ENCODE measurements at regions of chr5 and their contacts with region 1.

Region 1: GRCh38 chr5:94618493-94619328 is at the starts of genes KIAA0825 and SLF1:
- DNase-seq: peak; percentile 83
- H3K4me3 Mint-ChIP-seq: peak within 1 kb of the TSS; percentile 89
- H3K27ac Mint-ChIP-seq: peak within 1 kb of the TSS; percentile 96
- H3K4me1 Mint-ChIP-seq: peaks cover 55% of the 10 kb centered on the region
- H3K27me3 Mint-ChIP-seq: no peaks in the 10 kb centered on the region
- total RNA-seq, gene KIAA0825: 0.36 and 0.47 TPM in 2 replicates
- total RNA-seq, gene SLF1: 15.4 and 17.9 TPM in 2 replicates

Region 2: DNA sequence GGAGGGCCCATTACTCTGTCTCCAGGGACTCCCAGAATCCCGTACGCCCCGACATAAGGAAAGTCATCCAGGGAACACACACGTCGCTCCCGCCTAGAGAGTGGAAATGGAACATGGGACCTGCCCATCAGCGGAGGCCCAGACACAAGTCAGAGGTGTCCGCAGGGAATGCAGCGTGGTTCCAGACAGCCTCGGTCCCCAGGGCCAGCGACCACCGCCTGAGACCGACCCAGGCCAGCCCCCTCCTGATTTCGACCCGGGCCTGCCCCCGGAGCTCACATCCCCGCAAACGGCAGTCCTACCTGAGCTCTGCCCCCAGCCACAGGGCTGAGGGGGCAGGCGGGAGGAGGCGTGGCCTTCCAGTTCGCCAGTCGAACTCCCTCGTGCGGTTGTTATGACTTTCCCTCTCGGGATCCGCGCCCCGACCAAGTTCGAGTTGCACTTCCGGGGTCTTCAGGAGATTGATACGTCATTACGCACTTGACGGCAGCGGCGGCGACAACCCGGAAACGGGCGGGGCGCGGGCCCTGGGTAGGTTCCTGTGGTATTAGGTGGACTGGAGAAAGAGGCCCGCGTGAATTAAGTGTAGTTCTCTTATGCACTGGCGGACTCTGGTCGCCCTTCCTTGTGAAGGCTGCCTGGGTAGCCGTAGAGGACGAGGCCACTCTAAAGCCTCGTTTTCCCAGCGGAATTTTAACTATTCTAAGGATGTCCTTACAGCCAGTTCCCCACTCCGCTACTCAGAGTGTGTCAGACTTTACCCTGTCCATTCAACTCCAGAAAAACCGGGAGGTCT is 507.3 kb before region 1 on chr5:
- intact Hi-C with region 1: loop called (anchors 1 kb)
- DNase-seq: peak; percentile 88
- H3K4me3 Mint-ChIP-seq: peak overlapping the region; percentile 93
- H3K27ac Mint-ChIP-seq: peak overlapping the region; percentile 89
- H3K4me1 Mint-ChIP-seq: peaks cover 31% of the 10 kb centered on the region
- H3K27me3 Mint-ChIP-seq: peaks cover 3% of the 10 kb centered on the region

Region 3: GRCh38 chr5:94524841-94525697 is 93.6 kb before region 1 on chr5:
- intact Hi-C with region 1: loop called (anchors 1 kb)
- DNase-seq: peak; percentile 22
- H3K4me3 Mint-ChIP-seq: no peak overlapping the region
- H3K27ac Mint-ChIP-seq: no peak overlapping the region
- H3K4me1 Mint-ChIP-seq: peaks cover 9% of the 10 kb centered on the region
- H3K27me3 Mint-ChIP-seq: no peaks in the 10 kb centered on the region

Region 4: DNA sequence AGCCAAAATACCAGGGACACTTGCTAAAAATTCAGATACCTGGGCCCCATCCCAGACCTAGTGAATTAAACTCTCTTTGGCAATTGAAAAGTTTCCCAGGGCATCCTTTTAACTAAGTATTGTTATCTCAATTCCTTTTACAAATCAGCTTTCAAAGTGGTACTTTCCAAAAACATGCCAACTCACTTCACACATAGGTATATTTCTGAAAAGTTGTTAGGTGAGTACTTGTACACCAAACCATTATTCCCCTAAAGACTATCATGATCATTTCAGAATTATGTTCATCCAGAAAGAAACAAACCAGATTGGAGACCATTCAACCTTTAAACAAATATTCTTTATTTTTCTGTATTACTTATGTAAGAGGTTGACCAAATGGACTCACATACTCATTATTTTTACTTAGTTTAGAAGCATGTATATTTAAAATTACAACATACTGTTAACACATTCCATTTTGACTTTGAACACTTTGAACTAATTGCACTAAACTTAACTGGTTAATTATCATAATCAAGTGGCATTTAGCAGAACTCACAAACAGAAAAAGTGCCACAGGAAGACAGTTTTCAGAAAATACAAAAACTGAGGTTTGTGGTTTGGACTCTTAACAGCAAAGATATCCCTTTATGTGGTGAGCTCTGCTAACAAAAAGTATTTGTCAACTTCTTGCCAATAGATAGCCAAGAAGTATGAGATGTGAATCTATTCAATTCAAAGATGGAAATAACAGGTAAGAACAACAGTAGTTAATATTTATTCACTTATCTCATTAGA is 41.1 kb before region 1 on chr5:
- intact Hi-C with region 1: loop called (anchors 1 kb)
- DNase-seq: peak; percentile 13
- H3K4me3 Mint-ChIP-seq: peak overlapping the region; percentile 12
- H3K27ac Mint-ChIP-seq: peak overlapping the region; percentile 59
- H3K4me1 Mint-ChIP-seq: peaks cover 62% of the 10 kb centered on the region
- H3K27me3 Mint-ChIP-seq: no peaks in the 10 kb centered on the region

Region 5: GRCh38 chr5:94640176-94640575 is 21.5 kb after region 1 on chr5:
- intact Hi-C with region 1: loop called (anchors 1 kb)
- DNase-seq: no peak
- H3K4me3 Mint-ChIP-seq: no peak overlapping the region
- H3K27ac Mint-ChIP-seq: no peak overlapping the region
- H3K4me1 Mint-ChIP-seq: peaks cover 30% of the 10 kb centered on the region
- H3K27me3 Mint-ChIP-seq: no peaks in the 10 kb centered on the region

Region 6: DNA sequence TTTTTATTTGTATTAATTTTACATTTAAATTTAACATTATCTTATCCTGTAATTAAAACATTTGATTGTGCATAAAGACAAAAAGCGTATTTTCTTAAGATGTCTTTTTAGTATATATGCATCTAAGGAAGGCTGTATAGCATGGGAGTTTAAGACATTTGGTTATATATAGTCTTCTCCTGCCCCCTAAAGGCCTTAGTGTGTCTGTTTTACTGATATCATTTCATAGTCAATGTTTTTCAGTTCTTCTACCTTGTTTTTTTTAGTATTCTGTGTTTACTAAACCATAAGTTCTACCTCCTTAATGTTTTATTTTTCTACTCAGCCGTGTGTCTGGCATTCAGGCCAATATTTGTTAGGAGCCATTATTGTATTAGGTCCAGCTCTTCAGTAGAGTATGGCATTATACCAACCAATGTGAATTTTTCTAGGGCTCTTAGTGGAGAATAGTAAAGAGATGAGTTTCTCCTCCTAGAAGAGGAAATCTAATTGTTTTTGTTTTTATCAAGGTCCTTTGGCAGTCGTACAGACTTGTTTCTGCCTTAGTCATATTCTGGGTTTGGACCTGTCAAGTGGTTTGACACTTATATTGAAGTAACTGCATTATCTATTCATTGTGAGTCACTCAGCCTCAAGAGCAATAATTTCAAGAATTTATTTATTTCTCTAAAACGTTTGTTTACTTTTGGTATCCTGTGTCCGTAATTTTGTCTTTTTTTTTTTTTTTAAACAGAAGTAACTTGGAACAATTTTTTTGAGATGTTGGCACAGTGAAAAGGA is 74.5 kb after region 1 on chr5:
- intact Hi-C with region 1: loop called (anchors 5 kb)
- DNase-seq: no peak
- H3K4me3 Mint-ChIP-seq: no peak overlapping the region
- H3K27ac Mint-ChIP-seq: no peak overlapping the region
- H3K4me1 Mint-ChIP-seq: peaks cover 6% of the 10 kb centered on the region
- H3K27me3 Mint-ChIP-seq: no peaks in the 10 kb centered on the region

Region 7: DNA sequence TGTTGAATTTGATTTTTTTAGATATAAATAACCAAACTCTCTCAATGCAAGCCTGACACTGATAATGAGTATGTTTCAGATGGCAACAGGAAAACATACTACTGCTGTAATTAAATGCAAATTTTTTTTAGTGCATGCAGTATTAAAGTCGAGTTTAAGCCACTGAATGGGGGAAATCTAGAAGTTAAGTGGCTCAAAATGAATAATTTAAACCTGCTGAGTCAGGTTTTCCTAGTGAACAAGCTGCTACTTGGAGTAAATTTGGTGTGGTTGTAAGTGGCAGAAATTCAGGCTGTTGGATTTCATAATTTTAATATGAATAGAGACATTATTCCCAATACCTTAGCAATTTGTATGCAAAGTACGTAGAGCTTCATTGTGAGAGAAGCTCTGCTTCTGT is 121.6 kb after region 1 on chr5:
- intact Hi-C with region 1: loop called (anchors 1 kb)
- DNase-seq: no peak
- H3K4me3 Mint-ChIP-seq: no peak overlapping the region
- H3K27ac Mint-ChIP-seq: no peak overlapping the region
- H3K4me1 Mint-ChIP-seq: no peaks in the 10 kb centered on the region
- H3K27me3 Mint-ChIP-seq: peaks cover 2% of the 10 kb centered on the region

Region 8: GRCh38 chr5:95986937-95987520 is 1368.3 kb after region 1 on chr5:
- intact Hi-C with region 1: no loop called
- DNase-seq: no peak
- H3K4me3 Mint-ChIP-seq: no peak overlapping the region
- H3K27ac Mint-ChIP-seq: no peak overlapping the region
- H3K4me1 Mint-ChIP-seq: no peaks in the 10 kb centered on the region
- H3K27me3 Mint-ChIP-seq: no peaks in the 10 kb centered on the region